Activated naive CD4-positive, alpha-beta T cell treated with anti-CD3 and anti-CD28 coated beads for 36 hours (primary cell): ENCODE measurements at regions of chr4 and their contacts with region 1.

Region 1: DNA sequence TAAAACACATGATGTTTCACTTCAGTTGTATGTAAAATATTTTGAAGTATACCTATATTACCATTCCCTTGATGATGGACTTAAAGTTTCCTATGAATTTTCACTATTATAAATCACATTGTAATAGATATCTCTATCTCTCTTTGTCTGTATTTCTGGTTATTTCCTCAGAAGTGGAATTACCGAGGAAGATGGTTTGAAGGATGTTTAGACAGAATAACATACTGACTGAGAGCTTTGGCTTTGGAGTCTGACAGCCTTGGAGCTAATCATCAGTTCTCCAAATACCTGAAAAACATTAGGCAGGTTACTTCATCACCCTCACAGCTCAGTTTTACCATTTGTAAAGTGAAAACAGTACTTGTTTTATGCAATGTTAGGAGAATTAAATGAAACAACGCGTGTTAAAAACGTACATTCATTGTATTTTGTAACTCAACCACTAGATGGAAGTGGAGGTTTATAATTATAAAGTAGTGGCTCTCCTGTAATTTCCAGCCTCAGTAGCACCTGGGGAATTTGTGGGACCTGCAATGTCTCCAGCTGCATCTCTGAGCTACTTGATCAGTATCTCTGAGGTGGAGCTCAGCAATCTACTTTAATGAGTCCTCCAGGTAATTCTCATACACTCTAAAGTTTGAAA is 14.3 kb downstream of the JCHAIN start:
- DNase-seq: peak; percentile 9
- H3K4me3 Mint-ChIP-seq: no peak overlapping the region
- H3K27ac Mint-ChIP-seq: no peak overlapping the region
- H3K4me1 Mint-ChIP-seq: no peaks in the 10 kb centered on the region
- H3K27me3 Mint-ChIP-seq: peaks cover 1% of the 10 kb centered on the region

Region 2: GRCh38 chr4:70778888-70779422 is 127.0 kb after region 1 on chr4:
- CTCF ChIA-PET with region 1: no interaction called
- intact Hi-C with region 1: no loop called
- DNase-seq: no peak
- H3K4me3 Mint-ChIP-seq: no peak overlapping the region
- H3K27ac Mint-ChIP-seq: no peak overlapping the region
- H3K4me1 Mint-ChIP-seq: no peaks in the 10 kb centered on the region
- H3K27me3 Mint-ChIP-seq: no peaks in the 10 kb centered on the region

Region 3: DNA sequence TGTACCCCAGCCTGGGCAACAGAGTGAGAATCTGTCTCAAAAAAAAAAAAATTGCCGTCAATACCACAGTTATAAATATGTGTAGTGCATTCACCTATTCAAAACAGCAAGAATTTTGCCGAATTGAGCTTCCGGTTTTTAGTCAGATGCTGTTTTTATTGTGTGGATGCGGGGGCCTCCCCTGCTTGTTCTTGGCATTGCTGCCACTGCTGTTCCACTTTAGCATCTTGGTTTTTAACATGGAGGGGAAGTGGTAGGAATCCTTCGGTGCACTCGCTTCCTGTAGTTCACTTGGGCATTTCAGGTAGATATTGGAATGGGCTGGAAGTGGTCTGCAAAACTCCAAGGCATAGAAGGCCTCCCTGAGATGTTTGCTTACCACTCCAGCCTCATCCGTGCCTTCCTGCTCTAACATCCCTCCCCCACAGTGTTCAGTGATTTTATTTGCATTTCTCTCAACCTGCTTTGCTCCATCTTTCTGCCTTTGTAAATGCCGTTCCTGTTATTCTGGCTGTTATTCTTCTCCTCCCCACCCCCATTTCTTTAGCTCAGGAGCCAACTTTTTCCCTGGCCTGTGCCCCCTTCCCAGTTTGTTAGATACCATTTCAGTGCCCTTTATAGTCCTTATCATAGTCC is 275.6 kb after region 1 on chr4:
- CTCF ChIA-PET with region 1: no interaction called
- intact Hi-C with region 1: loop called (anchors 1 kb)
- DNase-seq: peak; percentile 73
- H3K4me3 Mint-ChIP-seq: peak overlapping the region; percentile 51
- H3K27ac Mint-ChIP-seq: peak overlapping the region; percentile 66
- H3K4me1 Mint-ChIP-seq: peaks cover 28% of the 10 kb centered on the region
- H3K27me3 Mint-ChIP-seq: no peaks in the 10 kb centered on the region

Region 4: GRCh38 chr4:71009890-71010588 is 358.1 kb after region 1 on chr4:
- CTCF ChIA-PET with region 1: interaction called, 5 read pairs
- intact Hi-C with region 1: loop called (anchors 1 kb)
- DNase-seq: no peak
- H3K4me3 Mint-ChIP-seq: no peak overlapping the region
- H3K27ac Mint-ChIP-seq: no peak overlapping the region
- H3K4me1 Mint-ChIP-seq: peaks cover 34% of the 10 kb centered on the region
- H3K27me3 Mint-ChIP-seq: no peaks in the 10 kb centered on the region

Region 5: DNA sequence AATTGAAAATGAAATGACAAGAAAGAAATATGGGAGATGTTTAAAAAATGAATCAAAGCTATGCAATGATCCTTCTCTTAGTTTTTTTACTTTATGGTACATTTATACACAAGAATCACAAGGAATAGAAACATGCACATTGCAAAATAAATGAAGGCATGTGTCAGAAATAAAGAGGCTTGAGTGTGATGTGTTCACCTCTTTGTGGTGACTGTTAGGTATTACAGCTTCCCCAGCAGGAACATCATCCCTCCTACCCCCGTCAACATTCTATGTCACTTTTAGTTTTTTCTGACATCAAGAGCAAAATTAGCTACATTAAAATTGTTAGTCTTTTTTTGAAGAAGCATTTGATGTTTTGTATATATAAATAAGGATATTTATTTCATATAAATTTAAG is 901.6 kb after region 1 on chr4:
- CTCF ChIA-PET with region 1: no interaction called
- intact Hi-C with region 1: loop called (anchors 10 kb)
- DNase-seq: no peak
- H3K4me3 Mint-ChIP-seq: no peak overlapping the region
- H3K27ac Mint-ChIP-seq: no peak overlapping the region
- H3K4me1 Mint-ChIP-seq: peaks cover 3% of the 10 kb centered on the region
- H3K27me3 Mint-ChIP-seq: peaks cover 2% of the 10 kb centered on the region

Region 6: DNA sequence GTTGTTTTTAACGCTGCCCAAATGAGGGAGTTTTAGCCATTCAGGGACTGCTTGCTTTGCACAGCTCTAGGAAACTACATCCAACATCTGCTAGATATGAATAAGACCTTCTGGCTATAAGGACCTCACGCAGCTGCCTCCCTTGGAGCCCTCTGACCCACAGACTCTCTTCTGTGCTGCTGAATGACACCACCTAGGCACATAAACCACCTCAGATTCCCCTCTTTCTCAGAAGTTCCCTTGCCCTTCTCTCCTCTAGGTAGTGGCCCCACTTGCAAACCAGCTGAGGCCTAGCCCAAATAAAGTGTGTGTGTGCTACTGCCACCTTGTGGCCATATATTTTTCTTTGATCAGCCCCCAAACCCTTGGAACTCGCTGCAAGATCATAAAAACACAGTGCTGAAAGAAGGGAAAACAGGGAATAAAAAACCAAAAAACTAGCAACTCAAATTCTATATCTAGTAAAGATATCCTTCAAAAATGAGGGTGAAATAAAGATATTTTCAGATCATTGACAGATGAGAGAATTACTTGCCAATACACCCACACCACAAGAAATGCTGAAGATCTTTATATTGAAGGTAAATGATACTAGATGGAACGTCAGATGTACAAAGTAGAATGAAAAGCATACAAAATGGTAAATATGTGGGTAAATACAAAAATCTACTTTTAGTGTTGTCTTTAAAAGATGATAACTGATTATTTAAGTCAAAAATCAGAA is 1651.2 kb after region 1 on chr4:
- CTCF ChIA-PET with region 1: interaction called, 3 read pairs
- intact Hi-C with region 1: loop called (anchors 2 kb)
- DNase-seq: peak; percentile 49
- H3K4me3 Mint-ChIP-seq: no peak overlapping the region
- H3K27ac Mint-ChIP-seq: no peak overlapping the region
- H3K4me1 Mint-ChIP-seq: no peaks in the 10 kb centered on the region
- H3K27me3 Mint-ChIP-seq: no peaks in the 10 kb centered on the region